Posterior cingulate gyrus (tissue), 11 donors: ENCODE measurements at regions of chr4 and their contacts with region 1.

Region 1: GRCh38 chr4:131091896-131092295 is 1995.9 kb downstream of the C4orf33 start:
- DNase-seq: no peak

Region 2: DNA sequence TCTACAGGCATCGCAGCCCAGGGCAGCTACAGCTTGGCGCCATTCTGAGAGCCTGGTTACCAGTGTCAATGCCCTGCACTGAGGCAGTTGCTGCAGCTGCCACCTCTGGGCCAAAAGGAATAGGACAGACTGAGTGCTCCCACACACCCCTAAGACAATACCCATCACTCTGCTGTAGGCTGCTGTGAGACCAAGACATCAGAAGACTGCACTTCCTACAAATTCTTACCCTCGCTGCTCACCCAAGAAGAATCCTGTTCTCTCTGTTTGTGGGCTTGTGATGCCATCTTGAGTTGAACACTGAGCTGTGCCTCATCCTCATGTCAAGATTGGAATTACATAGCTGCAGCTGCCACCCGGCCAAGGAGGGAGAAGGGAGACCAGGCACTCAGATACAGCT is 210.2 kb after region 1 on chr4:
- intact Hi-C with region 1: loop called (anchors 5 kb)
- DNase-seq: peak in 2 of 10 donors; percentile 23 to 29

Region 3: DNA sequence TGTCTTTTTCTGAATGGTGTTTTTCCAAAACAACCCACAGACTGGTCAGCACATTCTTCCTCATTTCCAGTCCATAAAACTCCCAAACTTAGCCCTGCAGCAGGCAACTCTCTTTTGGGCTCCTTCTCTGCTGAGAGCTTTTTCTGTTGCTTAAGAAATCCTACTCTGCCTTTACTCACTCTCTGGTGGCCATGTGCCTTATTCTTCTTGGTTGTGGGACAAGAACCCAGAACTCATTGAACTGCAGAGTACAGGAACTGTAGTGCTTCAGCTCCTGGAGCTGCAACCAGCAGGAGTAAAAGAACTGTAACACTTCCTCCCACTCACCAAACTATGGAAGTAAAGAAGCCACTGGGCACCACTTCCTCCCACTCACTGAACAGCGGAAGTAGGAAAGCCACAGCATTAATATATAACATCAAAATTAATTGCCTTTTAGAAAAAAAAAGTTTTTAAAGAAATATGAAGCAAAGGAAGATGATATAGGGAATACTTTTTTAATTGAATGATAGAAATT is 1193.1 kb after region 1 on chr4:
- intact Hi-C with region 1: no loop called
- DNase-seq: no peak

Region 4: DNA sequence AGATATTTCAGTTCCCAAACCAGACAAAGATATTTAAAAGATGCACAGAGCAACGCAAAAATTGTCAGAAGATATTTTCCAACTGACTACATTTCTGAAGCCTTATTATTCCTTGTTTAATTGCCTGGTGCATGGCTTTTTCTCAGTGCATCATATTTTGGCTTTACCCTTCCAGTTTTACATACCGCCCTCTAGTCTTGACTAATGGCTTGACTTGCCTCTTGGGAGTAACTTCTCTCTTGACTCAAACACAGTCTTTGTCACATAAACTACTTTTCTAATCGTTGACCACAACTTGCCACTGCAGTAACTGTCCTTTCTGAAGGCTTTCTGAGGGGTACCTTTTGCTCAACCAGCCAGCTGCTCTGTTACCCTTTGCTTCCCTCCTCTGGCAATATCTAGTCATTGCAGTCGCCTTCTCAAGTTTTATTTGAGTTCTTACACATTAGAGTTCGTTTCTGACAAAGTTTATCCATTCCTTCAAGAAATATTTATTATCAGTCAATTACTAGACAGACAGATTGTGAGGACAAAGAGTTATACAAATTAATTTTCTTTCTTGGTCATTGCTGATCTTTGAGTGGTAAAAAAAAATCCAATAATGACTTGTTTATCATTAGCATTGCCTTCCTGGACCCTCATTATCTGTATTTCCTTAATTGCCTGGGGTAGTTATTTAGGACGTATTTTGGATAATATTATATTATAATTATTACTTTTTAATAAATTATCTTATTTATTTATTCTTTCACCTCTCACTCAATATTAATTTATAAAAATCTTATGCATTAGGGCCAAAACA is 1550.3 kb after region 1 on chr4:
- intact Hi-C with region 1: loop called (anchors 5 kb)
- DNase-seq: peak in 2 of 10 donors; percentile 8 to 16